Colonic mucosa (tissue), 4 donors: ENCODE measurements at regions of chr1 and their contacts with region 1.

Region 1: DNA sequence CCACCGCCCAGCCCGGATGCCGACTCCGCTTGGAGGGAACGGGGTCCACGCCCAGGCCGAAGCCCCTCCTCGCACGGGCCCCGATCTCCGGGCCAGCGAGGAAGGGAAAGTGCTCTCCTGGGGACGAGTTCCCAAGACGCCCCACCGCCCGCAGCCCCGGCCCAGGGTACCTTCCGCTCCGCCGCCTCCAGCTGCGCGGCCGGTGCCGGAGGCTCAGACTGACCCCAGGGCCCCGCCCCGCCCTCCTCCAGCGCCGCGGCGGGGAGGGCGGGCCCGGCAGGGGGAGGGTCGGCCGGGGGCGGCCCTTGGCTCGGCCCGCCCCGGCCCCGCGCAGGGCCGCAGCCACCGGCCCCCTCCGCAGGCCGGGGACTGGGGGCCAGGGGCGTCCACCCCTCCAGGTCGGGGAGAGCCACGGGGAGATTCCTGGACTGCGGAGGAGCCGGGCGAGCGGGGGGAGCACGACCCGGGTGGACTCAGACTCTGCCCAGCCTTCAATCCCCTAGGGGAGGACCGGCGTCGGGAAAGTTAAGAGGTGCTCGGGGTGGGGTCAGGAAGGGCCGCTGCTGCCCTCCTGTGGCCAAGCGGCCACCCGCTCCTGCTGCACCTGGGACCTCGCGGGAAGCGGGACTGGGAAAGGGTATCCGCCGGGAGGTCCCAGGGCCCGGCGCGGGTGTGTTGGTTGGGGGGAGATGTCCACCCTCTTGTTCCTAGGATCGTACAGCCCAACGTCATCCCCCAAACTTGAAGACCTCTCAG is at the start of gene RHOC:
- DNase-seq: peak; percentile 90
- H3K4me3 ChIP-seq: peak within 1 kb of the TSS; percentile 86
- H3K27ac ChIP-seq: peak within 1 kb of the TSS; percentile 96
- H3K4me1 ChIP-seq: peaks cover 13% of the 10 kb centered on the region
- H3K27me3 ChIP-seq: no peaks in the 10 kb centered on the region
- CTCF ChIP-seq: peak; percentile 78
- total RNA-seq, gene RHOC: 327 to 451 TPM

Region 2: GRCh38 chr1:112390775-112391602 is 316.1 kb before region 1 on chr1:
- intact Hi-C with region 1: loop called (anchors 5 kb)
- DNase-seq: peak; percentile 96
- H3K4me3 ChIP-seq: peak overlapping the region; percentile 37
- H3K27ac ChIP-seq: peak overlapping the region; percentile 87
- H3K4me1 ChIP-seq: peaks cover 10% of the 10 kb centered on the region
- H3K27me3 ChIP-seq: no peaks in the 10 kb centered on the region
- CTCF ChIP-seq: peak; percentile 92

Region 3: GRCh38 chr1:112501810-112502641 is 205.1 kb before region 1 on chr1:
- intact Hi-C with region 1: loop called (anchors 5 kb)
- DNase-seq: peak; percentile 79
- H3K4me3 ChIP-seq: peak overlapping the region; percentile 42
- H3K27ac ChIP-seq: no peak overlapping the region
- H3K4me1 ChIP-seq: no peaks in the 10 kb centered on the region
- H3K27me3 ChIP-seq: no peaks in the 10 kb centered on the region
- CTCF ChIP-seq: peak; percentile 63

Region 4: GRCh38 chr1:112619520-112620376 is 87.3 kb before region 1 on chr1 and contains the start of gene CAPZA1:
- intact Hi-C with region 1: loop called (anchors 5 kb)
- DNase-seq: peak; percentile 93
- H3K4me3 ChIP-seq: peak within 1 kb of the TSS; percentile 83
- H3K27ac ChIP-seq: peak within 1 kb of the TSS; percentile 99
- H3K4me1 ChIP-seq: peaks cover 5% of the 10 kb centered on the region
- H3K27me3 ChIP-seq: no peaks in the 10 kb centered on the region
- CTCF ChIP-seq: no peak
- total RNA-seq, gene CAPZA1: 165 to 178 TPM

Region 5: DNA sequence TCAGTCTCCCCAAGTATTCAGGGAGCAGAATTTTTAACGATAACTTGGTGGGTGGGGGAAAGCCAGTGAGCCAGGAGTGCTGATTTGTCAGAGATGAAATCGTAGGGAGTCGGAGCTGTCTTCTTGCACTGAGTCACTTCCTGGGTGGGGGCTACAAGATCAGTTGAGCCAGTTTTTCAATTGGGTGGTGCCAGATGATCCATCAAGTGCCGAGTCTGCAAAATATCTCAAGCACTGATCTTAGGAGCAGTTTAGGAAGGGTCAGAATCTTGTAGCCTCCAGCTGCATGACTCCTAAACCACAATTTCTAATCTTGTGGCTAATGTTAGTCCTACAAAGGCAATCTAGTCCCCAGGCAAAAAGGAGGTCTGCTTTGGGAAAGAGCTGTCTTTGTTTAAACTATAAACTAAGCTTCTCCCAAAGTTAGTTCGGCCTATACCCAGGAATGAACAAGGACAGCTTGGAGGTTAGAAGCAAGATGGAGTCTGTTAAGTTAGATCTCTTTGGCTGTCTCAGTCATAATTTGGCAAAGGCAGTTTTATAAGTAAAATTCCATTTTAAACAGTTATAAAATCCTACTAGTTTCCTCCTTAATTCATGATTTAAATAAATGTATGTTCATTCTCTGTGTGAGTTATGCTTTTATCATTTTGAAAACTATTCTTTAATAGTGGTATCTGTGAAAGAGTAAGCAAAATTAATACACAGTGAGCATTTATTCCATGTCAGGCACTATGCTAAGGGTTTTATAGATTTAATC is 197.2 kb after region 1 on chr1:
- intact Hi-C with region 1: no loop called
- DNase-seq: no peak
- H3K4me3 ChIP-seq: no peak overlapping the region
- H3K27ac ChIP-seq: peak overlapping the region; percentile 68
- H3K4me1 ChIP-seq: no peaks in the 10 kb centered on the region
- H3K27me3 ChIP-seq: no peaks in the 10 kb centered on the region
- CTCF ChIP-seq: no peak